CD8-positive, alpha-beta T cell (primary cell): ENCODE measurements at regions of chr3 and their contacts with region 1.

Region 1: GRCh38 chr3:59510576-59510975 is 460.8 kb upstream of the CFAP20DC start:
- DNase-seq: no peak
- ATAC-seq: no peak
- H3K4me3 ChIP-seq: no peak overlapping the region
- H3K4me3 Mint-ChIP-seq: no peak overlapping the region
- H3K27ac ChIP-seq: no peak overlapping the region
- H3K27ac Mint-ChIP-seq: no peak overlapping the region
- H3K4me1 ChIP-seq: no peaks in the 10 kb centered on the region
- H3K4me1 Mint-ChIP-seq: peaks cover 15% of the 10 kb centered on the region
- H3K27me3 ChIP-seq: no peaks in the 10 kb centered on the region
- H3K27me3 Mint-ChIP-seq: peaks cover 3% of the 10 kb centered on the region
- CTCF ChIP-seq: no peak

Region 2: GRCh38 chr3:59424268-59425010 is 86.1 kb before region 1 on chr3:
- CTCF ChIA-PET with region 1: no interaction called
- POLR2A ChIA-PET with region 1: no interaction called
- intact Hi-C with region 1: loop called in 1 of 2 experiments (anchors 10 kb)
- DNase-seq: peak in 5 of 9 experiments; percentile 20 to 65 (median 29)
- ATAC-seq: peak; percentile 45
- H3K4me3 ChIP-seq: no peak overlapping the region
- H3K4me3 Mint-ChIP-seq: peak overlapping the region; percentile 20
- H3K27ac ChIP-seq: no peak overlapping the region
- H3K27ac Mint-ChIP-seq: peak overlapping the region; percentile 66
- H3K4me1 ChIP-seq: peaks cover 42% of the 10 kb centered on the region
- H3K4me1 Mint-ChIP-seq: peaks cover 47% of the 10 kb centered on the region
- H3K27me3 ChIP-seq: no peaks in the 10 kb centered on the region
- H3K27me3 Mint-ChIP-seq: no peaks in the 10 kb centered on the region
- CTCF ChIP-seq: no peak

Region 3: DNA sequence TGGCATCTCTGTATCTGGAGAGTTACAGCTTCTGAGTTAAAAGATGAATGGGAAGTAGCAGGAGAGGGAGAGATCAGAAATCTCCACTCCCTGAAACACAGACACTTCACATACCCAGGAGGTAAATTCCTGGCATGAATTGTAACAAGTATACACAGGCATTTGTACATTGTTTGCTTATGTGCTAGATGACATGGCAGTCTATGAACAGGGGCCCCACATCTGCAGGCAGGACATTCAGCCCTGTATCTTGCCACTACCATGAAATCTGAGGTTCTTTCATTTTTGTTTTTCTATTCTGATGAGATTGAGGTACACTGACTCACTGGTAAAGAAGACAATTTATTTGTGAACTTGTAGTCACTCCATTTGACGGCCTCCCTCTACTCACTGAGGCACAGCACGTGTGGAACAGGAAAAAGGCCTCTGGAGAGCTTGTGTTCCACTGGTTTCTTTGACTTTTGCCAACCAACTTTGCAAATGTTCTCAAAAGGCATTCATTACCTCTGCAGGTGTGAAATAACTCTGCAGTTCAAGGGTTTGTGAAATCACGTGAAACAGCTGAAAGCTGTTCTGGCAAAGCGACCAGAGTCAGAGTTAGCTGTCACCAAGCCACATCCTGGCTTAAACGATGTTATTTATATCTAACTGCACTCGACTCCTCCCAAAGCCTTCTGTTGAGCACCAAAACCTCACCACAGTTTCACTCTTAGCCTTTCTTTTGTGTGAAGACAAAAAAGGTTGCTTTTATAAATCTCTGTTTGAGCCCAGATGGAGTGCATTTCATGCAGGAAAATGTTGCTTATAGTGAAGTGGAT is 59.4 kb before region 1 on chr3:
- CTCF ChIA-PET with region 1: no interaction called
- POLR2A ChIA-PET with region 1: no interaction called
- intact Hi-C with region 1: no loop called
- DNase-seq: peak; percentile 26 to 90 (median 58)
- ATAC-seq: peak; percentile 90
- H3K4me3 ChIP-seq: peak overlapping the region in 1 of 2 experiments; percentile 22
- H3K4me3 Mint-ChIP-seq: peak overlapping the region; percentile 72
- H3K27ac ChIP-seq: peak overlapping the region; percentile 73 to 84
- H3K27ac Mint-ChIP-seq: peak overlapping the region; percentile 96
- H3K4me1 ChIP-seq: peaks cover 56% of the 10 kb centered on the region
- H3K4me1 Mint-ChIP-seq: peaks cover 81% of the 10 kb centered on the region
- H3K27me3 ChIP-seq: no peaks in the 10 kb centered on the region
- H3K27me3 Mint-ChIP-seq: no peaks in the 10 kb centered on the region
- CTCF ChIP-seq: no peak

Region 4: DNA sequence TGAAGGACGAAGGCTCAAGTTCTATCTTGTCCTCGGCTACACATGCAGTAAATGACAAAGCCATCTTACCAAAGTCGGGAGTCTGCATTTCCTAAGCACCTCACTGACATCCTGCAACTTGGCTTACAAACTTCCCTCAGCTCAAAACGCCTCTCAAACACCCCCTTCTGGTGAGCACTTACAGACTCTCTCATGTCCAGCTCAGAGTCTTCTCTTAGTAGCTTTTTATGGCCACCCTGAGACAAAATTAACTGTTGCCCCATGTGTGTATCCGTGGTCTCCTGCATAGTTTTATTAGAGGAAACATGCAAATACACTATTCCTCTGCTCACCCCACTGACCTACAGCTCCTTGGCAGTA is 921.0 kb after region 1 on chr3:
- CTCF ChIA-PET with region 1: no interaction called
- POLR2A ChIA-PET with region 1: no interaction called
- intact Hi-C with region 1: no loop called
- DNase-seq: peak in 2 of 9 experiments; percentile 2 to 18
- ATAC-seq: no peak
- H3K4me3 ChIP-seq: no peak overlapping the region
- H3K4me3 Mint-ChIP-seq: no peak overlapping the region
- H3K27ac ChIP-seq: no peak overlapping the region
- H3K27ac Mint-ChIP-seq: no peak overlapping the region
- H3K4me1 ChIP-seq: no peaks in the 10 kb centered on the region
- H3K4me1 Mint-ChIP-seq: peaks cover 19% of the 10 kb centered on the region
- H3K27me3 ChIP-seq: no peaks in the 10 kb centered on the region
- H3K27me3 Mint-ChIP-seq: no peaks in the 10 kb centered on the region
- CTCF ChIP-seq: no peak